Activated T-helper 1 cell treated with anti-CD3 and anti-CD28 coated beads, Interleukin-12 subunit alpha, Interleukin-12 subunit beta, Interleukin-2, Interleukin-4 antibody, amounts not matched to agents 30 ng/mL and 10 ng/mL and 1 ng/mL, durations not matched to agents 14 hours and 24 hours and 36 hours (primary cell): ENCODE measurements at regions of chr14 and their contacts with region 1.

Region 1: GRCh38 chr14:99199846-99200653 is 71.9 kb downstream of the BCL11B start:
- DNase-seq: no peak
- H3K4me3 Mint-ChIP-seq: no peak overlapping the region
- H3K27ac Mint-ChIP-seq: peak overlapping the region; percentile 63
- H3K4me1 Mint-ChIP-seq: peaks cover 91% of the 10 kb centered on the region
- H3K27me3 Mint-ChIP-seq: no peaks in the 10 kb centered on the region

Region 2: DNA sequence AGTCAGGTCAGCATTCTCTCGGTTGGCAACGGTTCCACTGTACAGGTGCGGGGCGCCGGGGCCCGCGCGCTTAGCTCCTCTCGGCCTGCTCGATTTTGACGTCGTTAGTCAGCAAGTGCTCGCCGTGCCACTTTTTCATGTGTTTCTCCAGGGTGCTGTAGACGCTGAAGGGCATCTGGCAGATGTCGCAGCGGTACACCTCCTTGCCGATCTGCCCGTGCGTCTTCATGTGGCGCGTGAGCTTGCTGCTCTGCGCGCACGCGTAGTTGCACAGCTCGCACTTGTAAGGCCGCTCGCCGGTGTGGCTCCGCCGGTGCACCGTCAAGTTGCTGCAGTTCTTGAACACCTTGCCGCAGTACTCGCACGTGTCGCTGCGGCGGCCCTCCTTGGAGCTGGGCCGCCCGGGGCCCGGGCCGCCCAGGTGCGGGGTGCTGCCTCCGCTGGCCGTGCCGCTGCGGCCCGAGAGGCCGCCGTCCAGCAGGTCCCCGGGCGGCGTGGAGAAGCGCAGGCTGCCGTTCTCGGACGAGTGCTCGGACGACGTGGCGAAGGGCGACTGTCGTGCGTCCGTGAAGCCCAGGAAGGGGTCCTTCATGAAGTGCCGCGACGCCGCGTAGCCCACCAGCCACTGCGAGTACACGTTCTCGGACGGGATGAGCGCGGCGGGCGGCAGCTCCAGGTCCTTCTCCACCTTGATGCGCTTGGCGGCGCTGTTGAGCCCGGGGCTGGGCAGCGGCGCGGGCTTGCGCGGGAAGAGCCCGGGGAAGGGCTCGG is 25.8 kb before region 1 on chr14:
- intact Hi-C with region 1: no loop called
- DNase-seq: no peak
- H3K4me3 Mint-ChIP-seq: no peak overlapping the region
- H3K27ac Mint-ChIP-seq: no peak overlapping the region
- H3K4me1 Mint-ChIP-seq: peaks cover 18% of the 10 kb centered on the region
- H3K27me3 Mint-ChIP-seq: no peaks in the 10 kb centered on the region

Region 3: GRCh38 chr14:99213101-99213500 is 13.1 kb after region 1 on chr14:
- intact Hi-C with region 1: loop called (anchors 1 kb)
- DNase-seq: no peak
- H3K4me3 Mint-ChIP-seq: peak overlapping the region; percentile 66
- H3K27ac Mint-ChIP-seq: peak overlapping the region; percentile 92
- H3K4me1 Mint-ChIP-seq: peaks cover 96% of the 10 kb centered on the region
- H3K27me3 Mint-ChIP-seq: no peaks in the 10 kb centered on the region